Activated T-helper 2 cell treated with anti-CD3 and anti-CD28 coated beads, Interferon-gamma antibody, Interleukin-2, Interleukin-4, amounts not matched to agents 10 μg/mL and 5 μg/mL and 100 μg/mL, durations not matched to agents 14 hours and 24 hours and 36 hours (primary cell): ENCODE measurements at regions of chr2 and their contacts with region 1.

Region 1: DNA sequence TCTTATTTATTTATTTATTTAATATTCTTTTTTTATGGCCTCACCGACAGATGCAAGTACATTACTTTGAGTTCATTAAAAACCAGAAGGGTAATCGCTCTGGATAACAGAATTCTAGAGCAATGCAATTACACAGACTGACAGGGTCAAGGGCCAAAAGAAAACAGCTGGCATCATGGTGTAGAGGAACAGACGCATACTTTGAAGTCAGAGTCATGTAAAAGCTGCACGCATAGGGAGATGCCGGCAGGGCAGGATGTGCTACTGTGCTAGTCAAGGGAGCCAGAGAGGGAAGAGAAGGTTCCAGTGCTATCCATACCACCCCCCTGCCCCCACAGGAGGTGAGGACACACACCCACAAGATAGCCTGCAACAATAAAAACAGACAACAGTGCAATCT is 115.2 kb upstream of the TFCP2L1 start:
- DNase-seq: no peak
- H3K4me3 Mint-ChIP-seq: no peak overlapping the region
- H3K27ac Mint-ChIP-seq: no peak overlapping the region
- H3K4me1 Mint-ChIP-seq: no peaks in the 10 kb centered on the region
- H3K27me3 Mint-ChIP-seq: no peaks in the 10 kb centered on the region

Region 2: GRCh38 chr2:121479882-121480522 is 79.8 kb after region 1 on chr2:
- intact Hi-C with region 1: loop called (anchors 10 kb)
- DNase-seq: no peak
- H3K4me3 Mint-ChIP-seq: no peak overlapping the region
- H3K27ac Mint-ChIP-seq: no peak overlapping the region
- H3K4me1 Mint-ChIP-seq: peaks cover 20% of the 10 kb centered on the region
- H3K27me3 Mint-ChIP-seq: no peaks in the 10 kb centered on the region

Region 3: GRCh38 chr2:122545821-122546220 is 1145.6 kb after region 1 on chr2:
- intact Hi-C with region 1: no loop called
- DNase-seq: no peak
- H3K4me3 Mint-ChIP-seq: no peak overlapping the region
- H3K27ac Mint-ChIP-seq: no peak overlapping the region
- H3K4me1 Mint-ChIP-seq: no peaks in the 10 kb centered on the region
- H3K27me3 Mint-ChIP-seq: no peaks in the 10 kb centered on the region